PC-3 (cell line): ENCODE measurements at regions of chrX and their contacts with region 1.

Region 1: DNA sequence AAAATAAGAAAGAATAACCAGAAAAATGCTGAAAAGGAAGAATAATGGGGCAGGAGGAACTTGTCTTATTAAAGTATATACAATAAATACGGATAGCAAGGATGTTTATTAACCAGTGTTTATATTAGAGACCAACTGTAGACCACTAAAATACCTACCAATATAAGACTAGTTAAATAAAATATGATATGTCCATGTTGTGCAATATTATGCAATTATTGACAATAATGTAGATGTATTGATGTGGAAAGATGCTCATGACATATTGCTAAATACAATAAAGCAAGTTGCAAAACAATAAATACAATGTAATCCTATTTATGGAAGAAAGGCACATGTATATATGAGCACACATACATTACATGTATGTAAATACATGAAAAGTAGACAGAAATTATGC is 41.0 kb upstream of the SLC25A43 start:
- DNase-seq: no peak
- ATAC-seq: no peak
- H3K4me3 ChIP-seq: no peak overlapping the region
- H3K27ac ChIP-seq: no peak overlapping the region
- H3K4me1 ChIP-seq: no peaks in the 10 kb centered on the region
- H3K27me3 ChIP-seq: no peaks in the 10 kb centered on the region
- CTCF ChIP-seq: no peak

Region 2: GRCh38 chrX:118795528-118796280 is 562.5 kb before region 1 on chrX:
- CTCF ChIA-PET with region 1: no interaction called
- POLR2A ChIA-PET with region 1: no interaction called
- intact Hi-C with region 1: no loop called
- DNase-seq: no peak
- ATAC-seq: no peak
- H3K4me3 ChIP-seq: no peak overlapping the region
- H3K27ac ChIP-seq: no peak overlapping the region
- H3K4me1 ChIP-seq: no peaks in the 10 kb centered on the region
- H3K27me3 ChIP-seq: no peaks in the 10 kb centered on the region
- CTCF ChIP-seq: no peak

Region 3: DNA sequence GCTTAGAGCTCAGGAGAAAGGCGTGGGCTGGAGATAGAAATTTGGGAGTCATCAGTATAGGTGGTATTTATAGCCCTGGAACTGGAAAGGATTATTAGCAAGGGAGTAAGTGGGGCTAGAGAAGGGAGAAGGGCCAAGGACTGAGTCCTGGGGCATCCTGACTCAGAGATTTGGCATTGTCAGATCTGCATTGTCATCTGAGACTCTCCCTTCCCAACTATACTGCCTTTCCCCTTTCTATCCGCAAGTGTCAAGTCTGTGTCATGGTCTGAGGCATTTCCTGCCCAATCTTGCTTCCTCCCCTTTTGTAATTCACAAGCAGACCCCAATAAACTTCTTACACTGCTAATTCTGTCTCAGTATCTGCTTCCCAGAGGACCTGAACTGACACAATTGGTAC is 16.6 kb after region 1 on chrX:
- CTCF ChIA-PET with region 1: no interaction called
- POLR2A ChIA-PET with region 1: interaction called, 30 read pairs
- intact Hi-C with region 1: no loop called
- DNase-seq: peak; percentile 77
- ATAC-seq: peak; percentile 88
- H3K4me3 ChIP-seq: no peak overlapping the region
- H3K27ac ChIP-seq: peak overlapping the region; percentile 43; the same call in 1 of the 2 replicates
- H3K4me1 ChIP-seq: peaks cover 14% of the 10 kb centered on the region
- H3K27me3 ChIP-seq: no peaks in the 10 kb centered on the region
- CTCF ChIP-seq: no peak